ENCODE measurements at regions of chr17 and their contacts with region 1.

Region 1: DNA sequence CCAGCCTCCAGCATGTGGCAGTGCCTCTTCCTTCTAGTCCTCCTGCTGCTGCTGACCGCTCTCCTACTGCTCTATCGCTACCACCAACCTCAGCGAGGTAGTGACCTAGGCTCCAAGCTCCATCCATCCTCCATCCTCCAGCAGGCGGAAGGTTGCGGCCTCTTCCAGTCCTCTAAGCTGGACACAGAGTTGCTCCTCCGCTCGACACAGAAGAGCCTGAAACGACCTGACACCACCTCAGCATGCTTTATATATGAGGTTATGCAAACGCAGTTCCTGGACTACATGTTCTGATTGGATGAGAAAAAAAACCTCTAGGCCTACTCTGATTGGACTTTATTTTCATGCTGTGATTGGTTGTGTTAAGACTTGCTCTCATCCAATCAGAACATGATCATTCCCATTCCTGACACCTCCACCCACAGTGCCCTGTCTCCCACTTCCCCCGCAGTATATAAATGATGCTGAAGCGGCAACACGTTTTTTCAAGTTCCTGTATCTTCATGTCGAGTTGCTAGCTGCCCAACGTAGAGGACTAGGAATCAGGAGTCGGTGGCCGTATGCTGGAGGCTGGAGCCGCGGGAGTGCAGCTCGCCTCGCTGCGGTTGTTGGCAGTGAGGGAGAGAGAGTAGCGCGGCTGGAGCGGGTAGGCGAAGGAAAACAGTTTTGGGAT is 398.1 kb downstream of the KCNJ18 start:
- DNase-seq: peak; percentile 26 to 93 (median 51)
- ATAC-seq: peak; percentile 96
- H3K4me3 ChIP-seq: peak overlapping the region; percentile 66
- H3K27ac ChIP-seq: peak overlapping the region; percentile 91
- H3K4me1 ChIP-seq: no peaks in the 10 kb centered on the region
- H3K27me3 ChIP-seq: no peaks in the 10 kb centered on the region
- CTCF ChIP-seq: no peak
- EP300 ChIP-seq: no peak
- POLR2A ChIP-seq: peak; percentile 99
- RAD21 ChIP-seq: no peak

Region 2: DNA sequence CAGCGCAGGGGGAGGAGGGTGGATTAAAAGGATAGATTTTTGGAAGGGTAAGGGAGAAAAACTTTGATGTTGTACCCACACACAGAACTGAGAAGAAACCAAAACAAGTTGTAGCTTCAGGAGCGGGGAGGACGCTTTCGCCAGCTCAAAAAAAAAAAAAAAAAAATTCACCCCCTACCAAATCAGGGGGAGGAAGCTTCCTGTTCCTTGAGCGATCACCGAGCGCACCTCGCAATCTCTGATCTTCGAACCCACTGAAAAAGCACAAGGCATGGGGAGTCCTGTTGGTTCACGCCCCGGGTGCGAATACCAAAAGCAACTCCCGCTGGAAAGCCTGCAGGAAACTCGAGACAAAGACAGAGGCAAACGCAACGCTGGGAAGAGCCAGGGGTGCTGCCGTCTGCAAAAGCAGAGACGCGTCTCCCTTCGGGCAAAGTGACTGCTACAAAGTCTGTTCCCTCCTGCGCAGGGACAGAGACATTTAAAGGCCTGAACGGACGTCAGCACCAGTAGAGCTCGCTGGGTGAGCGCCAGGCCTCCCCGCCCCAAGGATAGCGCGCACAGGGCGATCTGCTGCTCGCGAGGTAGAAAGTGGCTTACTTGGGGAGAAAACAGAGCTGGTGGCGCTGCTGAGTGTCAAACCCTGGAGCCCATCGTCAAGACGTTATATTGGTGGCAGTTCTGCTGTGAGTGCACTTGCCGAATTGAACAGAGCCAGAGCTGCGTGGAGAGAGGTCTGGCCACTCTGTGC is 1238.0 kb before region 1 on chr17:
- CTCF ChIA-PET with region 1: no interaction called
- POLR2A ChIA-PET with region 1: no interaction called
- in situ Hi-C with region 1: loop called (anchors 25 kb)
- intact Hi-C with region 1: no loop called
- DNase-seq: peak in 1 of 4 experiments; percentile 49
- ATAC-seq: peak; percentile 85
- H3K4me3 ChIP-seq: no peak overlapping the region
- H3K27ac ChIP-seq: no peak overlapping the region
- H3K4me1 ChIP-seq: peaks cover 0 to 4% of the 10 kb centered on the region in 2 experiments; a peak in 3 of 5 replicates
- H3K27me3 ChIP-seq: no peaks in the 10 kb centered on the region
- CTCF ChIP-seq: no peak
- EP300 ChIP-seq: no peak
- POLR2A ChIP-seq: no peak
- RAD21 ChIP-seq: no peak

Region 3: DNA sequence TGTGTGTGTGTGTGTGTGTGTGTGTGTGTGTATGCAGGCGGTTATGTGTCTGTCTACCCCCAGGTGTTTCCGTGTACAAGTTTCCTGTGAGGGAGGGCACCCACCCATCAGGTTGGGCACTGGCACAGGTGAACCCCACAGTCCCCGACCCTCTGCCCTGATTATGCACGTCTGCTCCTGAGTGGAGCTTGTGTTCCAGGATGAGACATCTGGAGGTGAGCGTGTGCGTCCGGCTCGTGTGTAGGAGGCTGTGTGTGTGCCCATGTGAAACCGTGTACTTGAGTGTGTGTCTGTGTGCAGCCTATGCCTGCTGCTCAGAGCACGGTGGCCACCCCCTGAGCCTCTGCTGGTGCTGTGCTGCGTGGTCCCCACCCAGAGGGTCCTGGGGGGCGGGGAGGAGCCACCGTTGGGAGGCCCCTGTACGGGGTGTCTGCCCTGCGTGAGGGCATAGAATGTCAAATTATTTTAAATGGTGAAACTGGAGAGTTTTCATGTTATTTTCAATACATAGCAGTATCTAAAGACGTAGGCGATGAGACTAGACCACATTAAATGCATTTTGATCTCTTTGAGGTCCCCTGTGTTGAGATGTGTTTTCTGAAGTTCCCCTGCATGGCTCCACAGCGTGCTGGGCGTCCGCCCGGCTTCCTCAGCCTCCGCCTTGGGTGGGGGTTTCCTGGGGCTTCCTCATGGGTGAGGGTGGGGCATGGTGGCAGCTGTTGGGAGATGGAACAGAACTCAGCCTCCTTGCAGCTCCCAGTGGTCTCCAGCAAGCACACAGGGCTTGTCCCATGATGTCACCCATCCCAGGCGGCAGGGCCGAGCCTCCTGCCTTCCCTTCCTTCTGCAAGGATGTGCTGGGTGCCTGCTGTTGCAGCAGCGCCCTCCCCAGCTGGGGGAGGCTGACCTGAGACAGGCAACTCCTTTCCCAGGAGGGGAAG is 670.8 kb before region 1 on chr17:
- CTCF ChIA-PET with region 1: no interaction called
- POLR2A ChIA-PET with region 1: no interaction called
- in situ Hi-C with region 1: loop called (anchors 25 kb)
- intact Hi-C with region 1: no loop called
- DNase-seq: no peak
- ATAC-seq: no peak; the same call in 2 of the 3 replicates
- H3K4me3 ChIP-seq: no peak overlapping the region
- H3K27ac ChIP-seq: no peak overlapping the region
- H3K4me1 ChIP-seq: no peaks in the 10 kb centered on the region
- H3K27me3 ChIP-seq: peaks cover 5 to 19% of the 10 kb centered on the region in 2 experiments; a peak in 4 of 5 replicates
- CTCF ChIP-seq: no peak
- EP300 ChIP-seq: no peak
- POLR2A ChIP-seq: no peak
- RAD21 ChIP-seq: no peak

Region 4: DNA sequence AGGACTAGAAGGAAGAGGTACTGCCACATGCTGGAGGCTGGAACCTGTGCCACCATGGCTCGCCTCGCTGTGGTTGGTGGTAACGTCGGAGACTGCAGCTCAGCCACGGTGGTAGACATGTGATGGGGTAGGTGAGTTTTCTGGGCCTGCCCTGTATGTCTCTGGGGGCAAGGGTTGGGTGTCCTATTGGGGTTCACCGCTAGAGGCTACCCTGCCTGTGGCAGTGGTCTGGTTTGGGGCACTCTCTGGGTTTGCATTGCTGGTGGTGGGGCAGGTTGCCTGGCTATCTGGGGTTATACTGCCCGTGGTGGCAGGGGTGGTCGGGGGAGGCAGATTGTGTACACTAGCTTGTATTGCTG is 477.3 kb before region 1 on chr17:
- CTCF ChIA-PET with region 1: no interaction called
- POLR2A ChIA-PET with region 1: interaction called, 3 read pairs
- in situ Hi-C with region 1: loop called (anchors 5 kb)
- intact Hi-C with region 1: no loop called
- DNase-seq: peak in 2 of 4 experiments; percentile 10 to 51
- ATAC-seq: peak; percentile 65; the same call in 2 of the 3 replicates
- H3K4me3 ChIP-seq: peak overlapping the region; percentile 57
- H3K27ac ChIP-seq: peak overlapping the region; percentile 94
- H3K4me1 ChIP-seq: no peaks in the 10 kb centered on the region
- H3K27me3 ChIP-seq: no peaks in the 10 kb centered on the region
- CTCF ChIP-seq: peak; percentile 3 to 35 (median 28); a peak in 3 of 6 replicates
- EP300 ChIP-seq: no peak
- POLR2A ChIP-seq: no peak
- RAD21 ChIP-seq: no peak

Region 5: GRCh38 chr17:22158364-22158763 is 68.0 kb after region 1 on chr17:
- CTCF ChIA-PET with region 1: no interaction called
- POLR2A ChIA-PET with region 1: no interaction called
- in situ Hi-C with region 1: no loop called
- intact Hi-C with region 1: no loop called
- DNase-seq: no peak
- ATAC-seq: peak; percentile 61
- H3K4me3 ChIP-seq: no peak overlapping the region
- H3K27ac ChIP-seq: no peak overlapping the region; the same call in 2 of the 3 replicates
- H3K4me1 ChIP-seq: no peaks in the 10 kb centered on the region
- H3K27me3 ChIP-seq: no peaks in the 10 kb centered on the region
- CTCF ChIP-seq: no peak
- EP300 ChIP-seq: no peak
- POLR2A ChIP-seq: no peak
- RAD21 ChIP-seq: no peak

Region 6: DNA sequence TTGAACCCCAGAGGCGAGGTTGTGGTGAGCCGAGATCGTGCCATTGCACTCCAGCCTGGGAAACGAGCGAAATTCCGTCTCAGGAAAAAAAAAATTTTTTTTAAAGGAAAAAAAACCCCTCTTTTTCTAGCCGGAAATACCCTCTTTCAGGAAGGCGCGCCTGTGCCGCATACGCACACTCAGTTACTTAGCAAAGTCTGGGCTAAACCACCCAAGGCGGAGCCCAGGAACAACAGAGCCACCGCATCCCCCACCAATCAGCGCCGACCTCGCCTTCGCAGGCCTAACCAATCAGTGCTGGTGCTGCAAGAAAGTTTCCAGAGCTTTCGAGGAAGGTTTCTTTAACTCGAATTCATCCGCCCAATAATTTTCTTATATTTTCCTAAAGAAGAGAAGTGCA is 112.3 kb after region 1 on chr17:
- CTCF ChIA-PET with region 1: no interaction called
- POLR2A ChIA-PET with region 1: no interaction called
- in situ Hi-C with region 1: no loop called
- intact Hi-C with region 1: no loop called
- DNase-seq: no peak
- ATAC-seq: no peak; the same call in 2 of the 3 replicates
- H3K4me3 ChIP-seq: no peak overlapping the region
- H3K27ac ChIP-seq: no peak overlapping the region
- H3K4me1 ChIP-seq: no peaks in the 10 kb centered on the region
- H3K27me3 ChIP-seq: no peaks in the 10 kb centered on the region
- CTCF ChIP-seq: no peak
- EP300 ChIP-seq: no peak
- POLR2A ChIP-seq: no peak
- RAD21 ChIP-seq: no peak